Panc1 (cell line): ENCODE measurements at regions of chr12 and their contacts with region 1.

Region 1: DNA sequence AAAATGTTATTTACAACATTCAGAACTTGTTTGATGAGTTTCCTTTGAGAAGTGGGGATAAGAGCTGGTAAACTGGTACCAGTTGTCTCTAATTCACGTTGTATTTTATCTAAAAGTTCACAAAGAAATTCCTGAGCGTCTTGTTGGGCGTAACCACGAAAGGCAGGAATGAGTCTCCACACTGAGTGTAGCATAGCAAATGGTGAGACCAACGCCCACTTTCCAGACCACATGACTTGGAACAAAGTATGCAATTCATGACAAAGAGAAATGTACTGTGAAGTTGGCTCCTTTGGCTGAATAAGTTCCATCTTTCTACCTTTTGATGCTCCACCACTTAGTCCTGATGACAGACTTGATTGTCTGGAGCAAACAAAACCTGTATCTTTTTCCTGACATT is 18.4 kb downstream of the USP44 start:
- DNase-seq: no peak
- ATAC-seq: no peak
- H3K4me3 ChIP-seq: no peak overlapping the region
- H3K27ac ChIP-seq: no peak overlapping the region
- H3K4me1 ChIP-seq: peaks cover 9% of the 10 kb centered on the region
- H3K27me3 ChIP-seq: peaks cover 3% of the 10 kb centered on the region; the same call in 1 of the 2 replicates
- CTCF ChIP-seq: no peak

Region 2: DNA sequence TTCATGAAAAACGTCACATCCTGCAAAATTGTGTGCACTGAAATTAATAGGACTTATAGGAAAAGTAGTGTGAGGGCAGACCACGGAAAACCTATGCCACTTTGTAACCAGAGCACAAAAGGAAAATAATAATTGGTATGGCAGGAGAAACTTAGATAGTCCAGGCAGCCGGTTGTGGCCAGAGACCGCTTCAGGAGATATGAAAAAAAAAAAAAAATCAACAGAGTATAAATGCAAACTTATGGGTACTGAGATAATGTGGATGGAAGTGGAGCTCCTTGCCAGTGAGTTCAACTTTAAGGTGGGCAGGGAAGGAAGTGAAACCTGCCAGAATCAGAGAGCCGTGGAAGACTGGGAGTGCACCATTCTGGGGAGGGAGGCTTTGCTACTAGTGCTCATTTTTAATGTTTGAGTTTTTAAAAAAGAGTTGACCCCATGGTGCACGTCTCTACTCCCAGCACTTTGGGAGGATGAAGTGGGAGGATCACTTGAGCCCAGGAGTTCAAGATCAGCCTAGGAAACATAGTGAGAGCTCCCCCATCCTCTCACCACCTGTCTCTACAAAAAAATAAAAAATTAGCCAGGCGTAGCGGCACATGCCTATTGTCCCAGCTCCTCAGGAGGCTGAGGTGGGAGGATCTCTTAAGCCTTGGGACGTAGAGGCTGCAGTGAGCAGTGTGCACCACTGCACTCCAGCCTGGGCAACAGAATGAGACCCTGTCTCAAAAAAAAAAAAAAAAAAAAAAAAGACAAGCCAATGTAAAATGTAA is 93.2 kb before region 1 on chr12:
- CTCF ChIA-PET with region 1: no interaction called
- POLR2A ChIA-PET with region 1: no interaction called
- in situ Hi-C with region 1: no loop called
- intact Hi-C with region 1: no loop called
- DNase-seq: no peak
- ATAC-seq: no peak
- H3K4me3 ChIP-seq: no peak overlapping the region
- H3K27ac ChIP-seq: no peak overlapping the region
- H3K4me1 ChIP-seq: no peaks in the 10 kb centered on the region
- H3K27me3 ChIP-seq: no peaks in the 10 kb centered on the region
- CTCF ChIP-seq: no peak

Region 3: GRCh38 chr12:95481072-95481471 is 51.8 kb before region 1 on chr12:
- CTCF ChIA-PET with region 1: interaction called, 10 read pairs
- POLR2A ChIA-PET with region 1: no interaction called
- in situ Hi-C with region 1: no loop called
- intact Hi-C with region 1: no loop called
- DNase-seq: no peak
- ATAC-seq: no peak
- H3K4me3 ChIP-seq: no peak overlapping the region
- H3K27ac ChIP-seq: no peak overlapping the region
- H3K4me1 ChIP-seq: no peaks in the 10 kb centered on the region
- H3K27me3 ChIP-seq: no peaks in the 10 kb centered on the region
- CTCF ChIP-seq: no peak